PC-9 (cell line): ENCODE measurements at regions of chr10 and their contacts with region 1.

Region 1: GRCh38 chr10:91632671-91633550 is at the start of gene PPP1R3C:
- DNase-seq: peak in 1 of 2 experiments; percentile 74
- H3K4me3 ChIP-seq: no peak within 1 kb of the TSS
- H3K27ac ChIP-seq: no peak within 1 kb of the TSS
- H3K4me1 ChIP-seq: no peaks in the 10 kb centered on the region
- H3K27me3 ChIP-seq: no peaks in the 10 kb centered on the region
- CTCF ChIP-seq: no peak
- total RNA-seq, gene PPP1R3C: 1.5 and 1.8 TPM in 2 replicates

Region 2: DNA sequence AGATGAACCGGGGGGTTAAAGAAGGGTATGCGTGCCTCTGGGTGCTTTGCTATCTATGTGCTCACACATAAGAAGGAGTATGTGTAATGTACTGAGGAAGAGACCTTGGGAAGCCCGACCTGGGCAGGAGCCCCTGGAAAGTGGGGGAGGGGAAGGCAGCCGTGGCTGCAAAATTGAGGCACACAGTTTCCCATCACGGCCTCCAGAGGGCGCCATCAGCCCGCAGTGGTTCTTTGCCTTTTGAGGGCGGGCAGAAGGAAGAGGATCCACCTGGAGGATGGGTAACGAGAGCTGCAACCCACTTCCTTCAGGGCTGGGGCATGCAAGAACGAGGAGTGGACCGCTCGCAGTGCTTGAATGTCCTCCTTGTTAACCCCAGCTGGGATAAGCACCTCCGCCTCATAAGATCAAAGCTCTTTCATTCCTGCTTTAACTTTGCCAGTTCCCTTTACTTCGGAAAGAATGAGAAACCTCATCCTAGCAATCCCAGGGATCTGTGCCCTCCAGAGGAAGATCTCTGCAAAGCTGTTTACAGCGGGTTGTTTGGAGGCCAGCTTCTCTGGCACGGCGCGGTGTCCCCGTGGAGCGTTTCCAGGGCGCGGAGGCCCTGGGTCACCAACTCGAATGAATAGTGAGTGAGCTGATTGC is 334.6 kb before region 1 on chr10:
- CTCF ChIA-PET with region 1: interaction called, 13 read pairs
- POLR2A ChIA-PET with region 1: no interaction called
- intact Hi-C with region 1: no loop called
- DNase-seq: peak; percentile 40 to 72
- H3K4me3 ChIP-seq: peak overlapping the region; percentile 24; the same call in 1 of the 2 replicates
- H3K27ac ChIP-seq: no peak overlapping the region
- H3K4me1 ChIP-seq: 0 out of 2 replicates have a peak, but pooled peaks cover 7% of the 10 kb centered on the region
- H3K27me3 ChIP-seq: no peaks in the 10 kb centered on the region
- CTCF ChIP-seq: peak; percentile 83

Region 3: GRCh38 chr10:91389636-91390512 is 243.0 kb before region 1 on chr10:
- CTCF ChIA-PET with region 1: no interaction called
- POLR2A ChIA-PET with region 1: no interaction called
- intact Hi-C with region 1: loop called (anchors 2 kb)
- DNase-seq: no peak
- H3K4me3 ChIP-seq: peak overlapping the region; percentile 32; the same call in 1 of the 2 replicates
- H3K27ac ChIP-seq: no peak overlapping the region
- H3K4me1 ChIP-seq: no peaks in the 10 kb centered on the region
- H3K27me3 ChIP-seq: 0 out of 2 replicates have a peak, but pooled peaks cover 4% of the 10 kb centered on the region
- CTCF ChIP-seq: peak; percentile 72

Region 4: GRCh38 chr10:91493313-91493712 is 139.6 kb before region 1 on chr10:
- CTCF ChIA-PET with region 1: interaction called, 5 read pairs
- POLR2A ChIA-PET with region 1: interaction called, 3 read pairs
- intact Hi-C with region 1: loop called (anchors 2 kb)
- DNase-seq: peak in 1 of 2 experiments; percentile 41
- H3K4me3 ChIP-seq: no peak overlapping the region
- H3K27ac ChIP-seq: no peak overlapping the region
- H3K4me1 ChIP-seq: no peaks in the 10 kb centered on the region
- H3K27me3 ChIP-seq: no peaks in the 10 kb centered on the region
- CTCF ChIP-seq: peak; percentile 66

Region 5: GRCh38 chr10:91551856-91552255 is 81.1 kb before region 1 on chr10:
- CTCF ChIA-PET with region 1: interaction called, 6 read pairs
- POLR2A ChIA-PET with region 1: no interaction called
- intact Hi-C with region 1: loop called (anchors 1 kb)
- DNase-seq: peak in 1 of 2 experiments; percentile 3
- H3K4me3 ChIP-seq: no peak overlapping the region
- H3K27ac ChIP-seq: no peak overlapping the region
- H3K4me1 ChIP-seq: no peaks in the 10 kb centered on the region
- H3K27me3 ChIP-seq: no peaks in the 10 kb centered on the region
- CTCF ChIP-seq: peak; percentile 47; the same call in 1 of the 2 replicates

Region 6: DNA sequence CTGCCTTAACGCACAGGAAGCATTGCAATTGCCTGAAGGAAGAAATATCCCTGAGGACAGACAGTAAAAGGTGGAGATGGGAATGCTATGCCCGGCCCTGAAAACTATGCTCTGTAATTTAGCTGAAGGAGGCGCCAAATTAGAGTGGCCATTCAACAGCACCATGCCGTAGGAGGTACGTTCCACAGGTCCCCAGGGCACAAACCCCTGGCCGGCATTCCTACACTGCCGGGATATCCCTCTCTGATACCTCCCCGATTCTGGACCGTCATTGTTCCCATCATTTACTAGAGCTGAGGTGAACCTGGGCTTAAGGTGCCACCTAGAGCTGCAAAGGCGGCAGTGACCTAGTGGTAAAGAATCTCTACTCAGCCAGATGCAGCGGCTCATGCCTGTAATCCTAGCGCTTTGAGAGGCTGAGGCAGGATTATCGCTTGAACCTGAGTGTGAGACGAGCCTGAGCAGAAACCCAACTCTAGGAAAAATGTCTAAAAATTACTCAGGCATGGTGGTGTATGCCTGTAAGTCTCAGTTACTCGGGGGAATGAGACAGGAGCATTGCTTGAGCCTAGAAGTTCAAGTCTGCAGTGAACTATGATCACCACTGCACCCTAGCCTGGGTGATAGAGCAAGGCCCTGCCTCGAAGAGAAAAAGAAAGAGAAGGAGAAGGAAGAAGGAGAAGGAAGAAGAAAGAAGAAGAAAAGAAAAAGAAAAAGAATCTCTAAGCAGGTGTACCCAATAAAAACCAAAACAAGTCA is 112.3 kb after region 1 on chr10:
- CTCF ChIA-PET with region 1: no interaction called
- POLR2A ChIA-PET with region 1: no interaction called
- intact Hi-C with region 1: loop called (anchors 10 kb)
- DNase-seq: peak in 1 of 2 experiments; percentile 23
- H3K4me3 ChIP-seq: no peak overlapping the region
- H3K27ac ChIP-seq: no peak overlapping the region
- H3K4me1 ChIP-seq: no peaks in the 10 kb centered on the region
- H3K27me3 ChIP-seq: no peaks in the 10 kb centered on the region
- CTCF ChIP-seq: no peak

Region 7: GRCh38 chr10:91919651-91920050 is 286.7 kb after region 1 on chr10:
- CTCF ChIA-PET with region 1: no interaction called
- POLR2A ChIA-PET with region 1: no interaction called
- intact Hi-C with region 1: no loop called
- DNase-seq: no peak
- H3K4me3 ChIP-seq: no peak overlapping the region
- H3K27ac ChIP-seq: no peak overlapping the region
- H3K4me1 ChIP-seq: peaks cover 5% of the 10 kb centered on the region; the same call in 1 of the 2 replicates
- H3K27me3 ChIP-seq: no peaks in the 10 kb centered on the region
- CTCF ChIP-seq: no peak